ENCODE measurements at regions of chr16 and their contacts with region 1.

Region 1: GRCh38 chr16:12067714-12068401 is 91.3 kb downstream of the SNX29 start:
- DNase-seq: peak; percentile 77
- CTCF ChIP-seq: peak; percentile 86

Region 2: DNA sequence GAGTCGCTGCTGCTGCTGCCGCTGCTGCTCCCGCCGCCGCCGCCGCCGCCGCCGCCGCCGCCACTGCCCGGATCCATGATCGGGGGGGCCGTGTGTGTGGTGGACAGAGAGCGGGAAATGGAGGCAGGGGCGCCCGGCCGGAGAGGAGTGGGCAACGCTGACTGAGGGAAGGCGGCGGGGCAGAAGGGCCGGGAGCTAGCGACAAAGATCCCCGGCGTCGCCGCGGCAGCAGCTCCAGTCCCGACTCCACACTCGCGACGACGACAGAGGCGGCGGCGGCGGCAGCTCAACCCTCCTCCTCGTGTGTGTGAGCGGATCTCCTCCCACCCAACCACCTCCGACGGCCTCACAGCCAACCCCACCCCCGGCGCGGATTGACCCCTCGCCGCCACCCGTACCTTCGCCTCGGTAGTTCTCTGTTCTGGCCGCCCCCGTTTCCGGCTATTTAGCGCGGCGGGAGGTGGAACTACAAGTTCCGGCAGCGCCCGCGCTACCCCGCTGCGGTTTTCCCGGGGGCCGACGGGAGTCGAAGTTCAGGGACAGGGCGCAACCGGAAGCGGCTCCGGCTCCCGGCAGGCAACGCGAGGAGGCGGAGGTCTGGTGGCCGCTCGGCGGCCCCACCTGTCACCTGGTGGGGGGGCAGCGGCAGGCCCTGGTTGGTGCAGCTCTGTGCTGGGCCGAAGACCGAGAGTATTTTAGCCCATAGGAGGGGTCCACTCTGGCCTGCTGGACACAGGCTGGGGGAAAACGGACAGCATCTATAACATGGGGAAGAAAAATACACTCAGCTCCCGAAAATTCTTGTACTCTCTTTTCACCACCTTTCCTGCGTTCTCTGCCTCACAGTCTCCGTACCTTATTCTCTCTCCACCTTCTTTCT is 152.0 kb before region 1 on chr16 and contains the start of gene GSPT1:
- CTCF ChIA-PET with region 1: interaction called, 10 read pairs
- POLR2A ChIA-PET with region 1: no interaction called
- DNase-seq: peak; percentile 97
- CTCF ChIP-seq: peak; percentile 8

Region 3: GRCh38 chr16:11955713-11956123 is 112.1 kb before region 1 on chr16:
- CTCF ChIA-PET with region 1: interaction called, 18 read pairs
- POLR2A ChIA-PET with region 1: no interaction called
- DNase-seq: no peak
- CTCF ChIP-seq: no peak

Region 4: GRCh38 chr16:12057266-12057665 is 10.6 kb before region 1 on chr16:
- CTCF ChIA-PET with region 1: interaction called, 33 read pairs
- POLR2A ChIA-PET with region 1: no interaction called
- DNase-seq: no peak
- CTCF ChIP-seq: no peak

Region 5: DNA sequence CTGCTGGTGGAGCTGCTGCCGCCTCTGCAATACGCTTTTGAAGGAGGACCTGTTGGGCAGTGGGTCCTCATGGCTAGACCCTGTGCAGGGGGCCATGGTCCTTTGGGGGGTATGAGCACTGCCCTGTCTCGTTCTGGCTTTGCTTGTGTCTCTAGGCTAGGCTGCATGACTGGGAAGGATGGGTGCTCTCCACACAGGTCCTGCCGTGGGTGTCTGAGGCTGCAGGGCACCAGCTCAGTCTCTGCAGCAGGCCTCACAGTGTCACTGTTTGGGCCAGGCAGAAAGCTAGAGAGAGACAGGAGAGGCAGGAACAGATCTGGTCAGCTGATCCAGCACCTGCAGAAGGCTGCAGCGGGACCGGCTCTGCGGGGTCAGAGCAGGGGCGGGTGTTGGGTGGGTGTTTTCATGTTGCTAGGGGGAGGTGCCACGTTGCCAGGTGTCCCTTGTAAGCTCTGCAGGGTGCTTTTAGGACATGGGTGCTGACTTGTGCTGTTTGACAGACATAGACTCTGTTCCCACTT is 20.1 kb after region 1 on chr16:
- CTCF ChIA-PET with region 1: interaction called, 15 read pairs
- POLR2A ChIA-PET with region 1: no interaction called
- DNase-seq: peak; percentile 44
- CTCF ChIP-seq: no peak